ENCODE measurements at regions of chr13 and their contacts with region 1.

Region 1: DNA sequence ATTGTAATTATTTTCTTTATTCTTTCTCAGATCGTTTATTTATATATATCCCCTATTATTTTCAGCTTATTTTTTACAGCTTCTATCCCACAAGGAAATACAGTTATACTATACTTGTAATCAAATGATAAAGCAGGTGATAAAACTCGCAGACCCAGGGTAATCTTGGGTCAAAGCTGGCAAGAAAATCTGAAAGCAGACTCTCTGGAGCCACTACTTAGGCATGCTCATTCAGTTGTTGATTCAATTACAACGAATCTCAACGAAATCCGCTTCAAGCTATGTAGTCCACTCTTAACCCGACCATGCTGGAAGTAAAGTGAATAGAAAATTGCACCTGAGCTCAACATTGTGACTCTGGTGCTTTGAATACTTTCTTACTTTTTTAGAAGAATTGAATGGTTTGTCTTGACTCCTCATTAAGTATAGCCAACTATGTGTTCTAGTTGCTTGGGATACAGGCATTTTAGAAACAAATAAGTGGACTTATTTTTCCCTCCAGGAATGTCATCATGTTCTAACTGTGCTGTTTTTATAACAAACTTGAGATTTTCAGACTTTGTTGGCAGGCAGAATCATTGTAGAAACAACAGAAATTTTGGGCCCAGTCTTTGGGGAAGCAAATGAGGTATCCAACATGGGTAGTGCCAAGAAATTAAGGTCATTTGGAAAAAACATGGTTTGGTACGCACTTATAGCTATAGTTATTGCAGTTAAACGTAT is 21.4 kb downstream of the ESD start:
- DNase-seq: no peak
- ATAC-seq: no peak
- H3K4me3 Mint-ChIP-seq: no peak overlapping the region
- H3K27ac Mint-ChIP-seq: no peak overlapping the region
- H3K4me1 Mint-ChIP-seq: no peaks in the 10 kb centered on the region
- H3K27me3 Mint-ChIP-seq: no peaks in the 10 kb centered on the region
- CTCF ChIP-seq: no peak

Region 2: GRCh38 chr13:46759846-46760245 is 15.7 kb before region 1 on chr13:
- CTCF ChIA-PET with region 1: interaction called, 14 read pairs
- POLR2A ChIA-PET with region 1: no interaction called
- intact Hi-C with region 1: no loop called
- DNase-seq: no peak
- ATAC-seq: no peak
- H3K4me3 Mint-ChIP-seq: no peak overlapping the region
- H3K27ac Mint-ChIP-seq: no peak overlapping the region
- H3K4me1 Mint-ChIP-seq: peaks cover 3% of the 10 kb centered on the region
- H3K27me3 Mint-ChIP-seq: no peaks in the 10 kb centered on the region
- CTCF ChIP-seq: no peak

Measured in activated CD8-positive, alpha-beta T cell treated with anti-CD3 and anti-CD28 coated beads for 36 hours (primary cell).